Activated T-helper 2 cell treated with anti-CD3 and anti-CD28 coated beads, Interferon-gamma antibody, Interleukin-2, Interleukin-4, amounts not matched to agents 10 μg/mL and 5 μg/mL and 100 μg/mL, durations not matched to agents 14 hours and 24 hours and 36 hours (primary cell): ENCODE measurements at regions of chr4 and their contacts with region 1.

Region 1: GRCh38 chr4:183659029-183659871 is at the starts of genes RWDD4 and TRAPPC11:
- DNase-seq: peak; percentile 95
- H3K4me3 Mint-ChIP-seq: peak within 1 kb of the TSS; percentile 93
- H3K27ac Mint-ChIP-seq: peak within 1 kb of the TSS; percentile 96
- H3K4me1 Mint-ChIP-seq: peaks cover 22% of the 10 kb centered on the region
- H3K27me3 Mint-ChIP-seq: no peaks in the 10 kb centered on the region
- total RNA-seq, gene RWDD4: 26.3 and 27.6 TPM in 2 replicates
- total RNA-seq, gene TRAPPC11: 28.1 and 32.0 TPM in 2 replicates

Region 2: GRCh38 chr4:183485401-183486160 is 173.7 kb before region 1 on chr4:
- intact Hi-C with region 1: no loop called
- DNase-seq: no peak
- H3K4me3 Mint-ChIP-seq: no peak overlapping the region
- H3K27ac Mint-ChIP-seq: no peak overlapping the region
- H3K4me1 Mint-ChIP-seq: no peaks in the 10 kb centered on the region
- H3K27me3 Mint-ChIP-seq: no peaks in the 10 kb centered on the region

Region 3: DNA sequence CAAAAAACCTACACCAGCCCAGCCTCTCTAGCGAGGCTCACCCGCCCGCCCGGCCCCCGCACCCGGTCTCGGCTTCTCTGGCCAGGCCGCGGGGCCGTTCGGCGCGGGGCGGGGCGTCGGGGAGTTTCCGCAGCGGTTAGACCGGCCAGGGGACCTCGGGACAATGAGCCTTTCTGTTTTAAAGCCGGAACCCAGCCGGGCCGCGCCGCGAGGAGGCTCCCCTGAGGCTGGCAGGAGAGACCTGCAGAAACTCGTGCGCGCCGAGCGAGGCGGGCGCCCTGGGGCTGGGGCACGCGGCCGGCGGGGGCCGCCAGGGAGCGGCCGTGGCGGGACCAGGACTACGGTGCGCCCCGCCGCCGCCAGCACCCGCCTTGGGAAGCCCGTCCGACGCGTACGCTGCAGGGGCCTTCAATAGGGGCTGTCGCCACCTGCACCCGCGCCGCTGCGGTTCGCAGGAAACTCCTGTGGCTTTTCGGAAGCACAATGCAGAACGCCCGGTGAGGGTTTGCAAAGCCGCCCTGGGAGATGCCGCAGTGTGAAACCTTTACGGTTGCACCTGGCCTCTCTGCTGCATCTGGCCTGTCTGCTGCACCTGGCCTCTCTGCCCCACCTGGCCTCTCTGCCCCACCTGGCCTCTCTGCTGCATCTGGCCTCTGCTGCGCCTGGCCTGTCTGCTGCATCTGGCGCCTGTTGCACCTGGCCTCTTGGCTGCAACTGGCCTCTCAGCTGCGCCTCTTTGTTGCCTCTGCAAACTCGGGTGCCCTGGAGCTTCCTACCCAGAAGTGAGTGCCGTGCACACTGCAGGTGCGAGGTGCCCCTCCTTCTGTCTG is 63.7 kb after region 1 on chr4:
- intact Hi-C with region 1: loop called (anchors 5 kb)
- DNase-seq: peak; percentile 37
- H3K4me3 Mint-ChIP-seq: peak overlapping the region; percentile 80
- H3K27ac Mint-ChIP-seq: no peak overlapping the region
- H3K4me1 Mint-ChIP-seq: peaks cover 9% of the 10 kb centered on the region
- H3K27me3 Mint-ChIP-seq: peaks cover 31% of the 10 kb centered on the region

Region 4: DNA sequence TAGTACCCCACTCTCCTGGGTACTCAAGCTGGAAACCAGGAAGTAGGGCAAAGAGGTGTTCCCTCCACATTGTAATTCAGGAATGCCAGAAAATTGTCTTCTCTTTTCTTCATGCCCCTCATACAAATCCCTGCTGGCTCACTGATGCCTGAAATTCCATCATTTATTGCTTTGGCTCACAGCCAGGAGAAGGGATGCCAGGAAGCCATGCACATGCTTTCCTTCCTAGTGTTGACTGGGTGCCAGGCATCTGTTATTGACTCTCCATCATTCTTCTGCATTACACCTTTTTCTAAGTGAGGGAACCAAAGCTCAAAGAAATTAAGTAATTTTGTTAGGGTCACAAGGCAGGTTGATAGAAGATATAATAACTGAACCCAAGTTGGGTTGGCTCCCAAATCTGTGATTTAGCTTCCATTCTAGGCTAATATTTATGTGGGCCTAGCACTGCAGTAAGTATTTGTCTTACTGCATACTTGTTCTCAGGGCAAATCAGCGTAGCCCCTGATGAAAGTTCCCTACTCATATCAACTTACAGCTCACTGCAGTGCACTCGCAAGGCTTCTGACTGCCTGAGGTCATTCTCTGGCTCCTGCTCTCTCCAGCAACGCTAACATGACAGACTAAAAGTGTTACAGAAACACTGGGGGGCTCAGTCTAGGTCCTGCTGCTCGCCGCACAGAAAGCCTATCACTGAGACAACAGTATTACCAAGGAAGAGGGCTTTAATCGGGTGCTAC is 88.9 kb after region 1 on chr4:
- intact Hi-C with region 1: no loop called
- DNase-seq: no peak
- H3K4me3 Mint-ChIP-seq: no peak overlapping the region
- H3K27ac Mint-ChIP-seq: no peak overlapping the region
- H3K4me1 Mint-ChIP-seq: no peaks in the 10 kb centered on the region
- H3K27me3 Mint-ChIP-seq: peaks cover 4% of the 10 kb centered on the region